Caco-2 (cell line): ENCODE measurements at regions of chr2 and their contacts with region 1.

Region 1: GRCh38 chr2:45289997-45290709 is 280.9 kb upstream of the SIX2 start:
- DNase-seq: no peak
- H3K4me3 ChIP-seq: no peak overlapping the region
- H3K4me3 Mint-ChIP-seq: no peak overlapping the region
- H3K27ac Mint-ChIP-seq: no peak overlapping the region
- H3K4me1 ChIP-seq: no peaks in the 10 kb centered on the region
- H3K4me1 Mint-ChIP-seq: no peaks in the 10 kb centered on the region
- H3K27me3 ChIP-seq: no peaks in the 10 kb centered on the region
- H3K27me3 Mint-ChIP-seq: no peaks in the 10 kb centered on the region
- CTCF ChIP-seq: no peak

Region 2: DNA sequence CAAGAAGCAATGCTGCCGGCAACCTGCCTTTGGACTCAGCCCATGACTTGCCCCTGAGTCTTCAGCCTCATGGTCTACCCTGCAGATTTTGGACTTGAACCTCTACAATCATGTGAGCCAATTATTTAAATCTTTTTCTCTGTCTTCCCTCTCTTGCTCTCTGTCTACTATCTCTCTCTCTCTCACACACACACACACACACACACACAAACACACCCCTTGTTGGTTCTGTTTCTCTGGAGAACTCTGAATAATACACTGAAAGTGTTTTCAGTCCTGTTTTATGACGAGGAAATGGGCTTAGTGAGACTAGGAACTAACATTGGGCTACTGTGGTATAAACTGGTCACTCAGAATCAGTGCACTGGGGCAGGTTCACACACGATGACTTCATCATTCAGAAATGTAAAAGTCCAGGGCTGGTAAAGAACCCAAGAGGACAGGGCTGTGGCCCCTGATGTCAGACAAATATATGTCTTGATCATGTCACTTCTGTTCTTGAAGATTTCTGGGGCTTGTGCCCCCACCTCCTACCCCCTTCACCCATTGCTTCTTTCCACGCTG is 14.8 kb before region 1 on chr2:
- CTCF ChIA-PET with region 1: no interaction called
- POLR2A ChIA-PET with region 1: no interaction called
- intact Hi-C with region 1: no loop called
- DNase-seq: peak; percentile 40 to 55
- H3K4me3 ChIP-seq: no peak overlapping the region
- H3K4me3 Mint-ChIP-seq: no peak overlapping the region
- H3K27ac Mint-ChIP-seq: peak overlapping the region; percentile 41
- H3K4me1 ChIP-seq: peaks cover 53% of the 10 kb centered on the region
- H3K4me1 Mint-ChIP-seq: peaks cover 25% of the 10 kb centered on the region
- H3K27me3 ChIP-seq: no peaks in the 10 kb centered on the region
- H3K27me3 Mint-ChIP-seq: no peaks in the 10 kb centered on the region
- CTCF ChIP-seq: no peak

Region 3: DNA sequence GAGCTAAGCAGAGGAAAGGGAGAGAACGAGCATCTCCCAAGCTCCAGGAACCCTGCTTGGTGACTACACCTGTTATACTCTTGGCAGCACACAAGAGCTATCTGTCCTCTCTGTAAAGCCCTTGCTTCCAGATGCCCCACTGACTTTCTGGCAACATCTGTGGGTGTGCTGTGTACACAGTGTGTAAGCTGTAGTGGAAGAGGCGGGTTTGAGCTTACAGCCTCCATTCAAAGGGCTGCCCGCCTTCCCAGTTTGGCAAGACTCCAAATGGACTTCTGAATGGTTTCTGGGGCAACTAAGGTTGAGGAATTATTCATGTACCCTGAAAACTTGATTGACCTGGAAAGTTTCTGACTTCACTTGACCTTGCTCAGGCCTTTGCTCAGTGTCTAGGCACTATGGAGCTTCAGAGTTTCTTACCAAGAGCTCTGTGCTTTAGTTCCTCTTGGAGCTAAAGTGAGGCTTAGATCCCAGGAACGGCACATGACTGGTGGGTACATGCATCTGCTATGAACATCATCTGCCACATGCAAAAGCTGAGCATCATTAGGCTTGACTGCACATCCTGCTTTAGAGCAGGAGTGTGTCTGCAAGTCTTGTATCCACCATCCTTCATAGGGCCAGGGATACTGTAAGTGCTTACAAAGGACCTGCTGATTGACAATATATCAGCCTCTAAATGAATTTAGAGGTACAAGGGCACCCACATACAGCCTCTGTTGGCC is 10.0 kb after region 1 on chr2:
- CTCF ChIA-PET with region 1: no interaction called
- POLR2A ChIA-PET with region 1: no interaction called
- intact Hi-C with region 1: no loop called
- DNase-seq: no peak
- H3K4me3 ChIP-seq: no peak overlapping the region
- H3K4me3 Mint-ChIP-seq: no peak overlapping the region
- H3K27ac Mint-ChIP-seq: no peak overlapping the region
- H3K4me1 ChIP-seq: no peaks in the 10 kb centered on the region
- H3K4me1 Mint-ChIP-seq: no peaks in the 10 kb centered on the region
- H3K27me3 ChIP-seq: no peaks in the 10 kb centered on the region
- H3K27me3 Mint-ChIP-seq: peaks cover 4% of the 10 kb centered on the region
- CTCF ChIP-seq: no peak

Region 4: GRCh38 chr2:45353879-45354278 is 63.7 kb after region 1 on chr2:
- CTCF ChIA-PET with region 1: no interaction called
- POLR2A ChIA-PET with region 1: no interaction called
- intact Hi-C with region 1: loop called (anchors 2 kb)
- DNase-seq: no peak
- H3K4me3 ChIP-seq: no peak overlapping the region
- H3K4me3 Mint-ChIP-seq: no peak overlapping the region
- H3K27ac Mint-ChIP-seq: no peak overlapping the region
- H3K4me1 ChIP-seq: 0 out of 2 replicates have a peak, but pooled peaks cover 3% of the 10 kb centered on the region
- H3K4me1 Mint-ChIP-seq: peaks cover 7% of the 10 kb centered on the region
- H3K27me3 ChIP-seq: no peaks in the 10 kb centered on the region
- H3K27me3 Mint-ChIP-seq: no peaks in the 10 kb centered on the region
- CTCF ChIP-seq: no peak